Heart left ventricle (tissue), 16 donors: ENCODE measurements at regions of chr4 and their contacts with region 1.

Region 1: DNA sequence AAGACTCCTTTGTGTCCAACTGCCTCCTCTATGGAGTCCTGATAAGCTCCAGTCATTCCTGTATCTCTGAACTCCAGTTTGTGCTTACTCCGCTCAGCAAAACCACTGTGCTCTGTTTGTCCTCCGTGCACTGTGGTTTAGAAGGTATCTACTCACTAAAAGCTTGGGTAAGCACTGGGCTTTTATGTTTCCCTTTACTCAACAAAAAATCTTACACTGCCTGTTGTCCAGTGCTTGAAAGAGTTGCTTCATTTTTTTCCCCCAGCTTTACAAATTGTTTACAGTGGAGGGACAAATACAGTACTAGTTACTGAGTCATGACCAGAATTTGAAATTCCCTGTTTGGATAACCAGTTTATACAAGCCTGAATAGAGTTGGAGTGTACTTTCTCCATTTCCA is 545.3 kb upstream of the FAT1 start:
- DNase-seq: no peak
- ATAC-seq: no peak
- H3K4me3 ChIP-seq: no peak overlapping the region
- H3K27ac ChIP-seq: no peak overlapping the region
- H3K4me1 ChIP-seq: no peaks in the 10 kb centered on the region
- H3K27me3 ChIP-seq: no peaks in the 10 kb centered on the region
- CTCF ChIP-seq: no peak
- POLR2A ChIP-seq: no peak

Region 2: GRCh38 chr4:187715466-187715865 is 446.5 kb after region 1 on chr4:
- intact Hi-C with region 1: loop called in 1 of 10 experiments (anchors 10 kb)
- DNase-seq: no peak
- ATAC-seq: no peak
- H3K4me3 ChIP-seq: no peak overlapping the region
- H3K27ac ChIP-seq: no peak overlapping the region
- H3K4me1 ChIP-seq: no peaks in the 10 kb centered on the region
- H3K27me3 ChIP-seq: no peaks in the 10 kb centered on the region
- CTCF ChIP-seq: no peak
- POLR2A ChIP-seq: no peak